ENCODE measurements at regions of chr12 and their contacts with region 1.

Region 1: DNA sequence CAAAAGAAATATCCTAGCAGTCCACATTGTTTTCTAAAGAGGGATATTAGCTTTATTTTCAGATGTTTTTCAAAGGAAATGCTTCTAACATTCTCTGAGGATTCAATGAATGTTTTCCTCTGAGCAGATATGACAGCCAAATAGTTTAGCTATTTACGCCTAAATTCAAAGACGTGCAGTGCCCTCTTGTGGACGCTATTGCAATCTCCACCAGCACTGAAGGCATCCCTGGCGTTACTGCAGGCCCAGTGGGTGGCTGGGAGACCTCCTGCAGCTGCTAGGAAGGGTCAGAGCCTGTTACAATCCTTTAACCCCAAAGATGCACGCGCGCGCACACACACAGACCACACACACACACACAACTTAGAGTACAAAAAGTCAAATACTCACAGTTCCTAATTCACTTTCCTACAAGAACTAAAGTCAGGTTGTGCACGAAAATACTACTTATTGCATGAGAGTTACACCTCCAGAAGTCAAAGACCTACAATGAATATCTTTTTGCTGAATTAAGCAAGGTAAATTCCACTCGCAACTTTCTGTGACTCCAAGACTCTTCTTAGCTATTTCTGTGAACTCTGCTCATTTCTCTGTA is 589.3 kb upstream of the TMEM132C start:
- DNase-seq: peak; percentile 32 to 62
- ATAC-seq: peak in 7 of 8 donors; percentile 47 to 84 (median 74)
- H3K4me3 ChIP-seq: no peak overlapping the region
- H3K27ac ChIP-seq: no peak overlapping the region
- H3K4me1 ChIP-seq: peaks cover 0 to 8% (median 0%) of the 10 kb centered on the region in 9 donors
- H3K27me3 ChIP-seq: peaks cover 0 to 3% (median 0%) of the 10 kb centered on the region in 7 donors
- CTCF ChIP-seq: peak; percentile 52 to 80 (median 70)

Region 2: DNA sequence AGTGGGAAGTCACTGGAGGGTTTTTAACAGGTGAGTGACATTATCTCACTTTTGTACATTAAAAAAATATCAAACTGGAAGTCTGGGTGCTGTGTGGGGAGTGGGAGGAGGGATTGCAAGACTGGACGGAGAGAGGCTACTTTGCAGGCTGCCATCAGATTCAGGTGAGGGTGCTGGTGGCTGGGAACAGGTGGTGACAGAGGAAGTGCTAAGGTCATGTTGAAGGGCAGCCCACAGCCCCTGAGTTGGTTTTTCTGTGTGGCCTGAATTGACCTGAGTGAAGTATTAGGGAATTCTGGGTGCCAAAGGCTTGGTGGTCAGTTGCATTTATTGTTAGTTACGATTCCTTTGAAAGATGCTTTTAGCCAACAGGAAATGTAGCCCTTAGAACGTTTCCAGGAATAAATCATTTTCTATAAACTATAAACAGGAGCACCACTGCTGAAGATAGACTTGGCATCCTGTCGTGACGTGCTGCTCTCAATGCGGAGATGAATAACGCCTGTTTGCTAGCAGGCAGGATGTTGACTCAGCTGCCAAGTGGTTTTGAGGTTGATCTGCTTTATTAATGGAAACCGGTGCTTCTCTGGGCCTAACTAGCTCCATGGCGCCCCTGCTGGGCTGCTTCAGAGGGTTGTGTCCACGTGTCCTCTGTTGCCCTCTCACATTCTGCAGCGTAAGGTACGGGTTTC is 118.1 kb before region 1 on chr12:
- intact Hi-C with region 1: no loop called
- DNase-seq: peak; percentile 17 to 51
- ATAC-seq: peak in 6 of 8 donors; percentile 28 to 84 (median 74)
- H3K4me3 ChIP-seq: no peak overlapping the region
- H3K27ac ChIP-seq: peak overlapping the region in 2 of 10 donors; percentile 38 to 50
- H3K4me1 ChIP-seq: peaks cover 0 to 9% (median 0%) of the 10 kb centered on the region in 9 donors
- H3K27me3 ChIP-seq: peaks cover 0 to 1% (median 0%) of the 10 kb centered on the region in 7 donors
- CTCF ChIP-seq: peak in 6 of 9 donors; percentile 31 to 56 (median 38)

Region 3: DNA sequence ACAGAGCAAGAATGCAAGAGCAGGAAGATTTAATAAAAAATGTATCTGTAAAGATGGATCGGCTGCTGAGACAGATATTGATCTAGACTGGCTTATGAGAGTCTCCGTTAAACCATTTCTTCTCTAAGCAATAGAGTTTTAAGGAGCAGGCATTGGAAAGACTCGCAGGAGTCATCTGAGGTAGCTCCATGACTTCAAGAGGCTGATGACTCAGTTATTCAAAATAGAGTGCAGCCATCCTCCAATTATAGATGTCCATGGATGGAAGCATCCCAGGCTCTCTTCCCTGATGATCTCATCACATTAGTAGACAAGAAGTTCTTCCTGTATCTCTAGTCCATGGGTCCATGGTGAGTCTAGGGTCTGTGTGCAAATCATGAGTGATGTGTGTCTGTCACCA is 49.0 kb before region 1 on chr12:
- intact Hi-C with region 1: no loop called
- DNase-seq: no peak
- ATAC-seq: no peak
- H3K4me3 ChIP-seq: no peak overlapping the region
- H3K27ac ChIP-seq: no peak overlapping the region
- H3K4me1 ChIP-seq: no peaks in the 10 kb centered on the region
- H3K27me3 ChIP-seq: peaks cover 0 to 7% (median 0%) of the 10 kb centered on the region in 7 donors
- CTCF ChIP-seq: no peak

Region 4: GRCh38 chr12:127925971-127926370 is 248.3 kb after region 1 on chr12:
- intact Hi-C with region 1: loop called in 6 of 10 experiments (anchors 5 to 10 kb)
- DNase-seq: peak in 1 of 2 donors; percentile 32
- ATAC-seq: peak in 6 of 8 donors; percentile 47 to 87 (median 76)
- H3K4me3 ChIP-seq: no peak overlapping the region
- H3K27ac ChIP-seq: no peak overlapping the region
- H3K4me1 ChIP-seq: peaks cover 0 to 30% (median 12%) of the 10 kb centered on the region in 9 donors
- H3K27me3 ChIP-seq: no peaks in the 10 kb centered on the region
- CTCF ChIP-seq: peak in 8 of 9 donors; percentile 28 to 81 (median 61)